ENCODE measurements at regions of chr14 and their contacts with region 1.

Region 1: GRCh38 chr14:81269100-81269978 is 48.6 kb upstream of the GTF2A1 start:
- DNase-seq: no peak
- H3K4me3 ChIP-seq: no peak overlapping the region
- H3K27ac ChIP-seq: no peak overlapping the region
- H3K4me1 ChIP-seq: peaks cover 8% of the 10 kb centered on the region
- H3K27me3 ChIP-seq: no peaks in the 10 kb centered on the region
- CTCF ChIP-seq: peak; percentile 42 to 83 (median 82)
- EP300 ChIP-seq: no peak
- POLR2A ChIP-seq: no peak

Region 2: DNA sequence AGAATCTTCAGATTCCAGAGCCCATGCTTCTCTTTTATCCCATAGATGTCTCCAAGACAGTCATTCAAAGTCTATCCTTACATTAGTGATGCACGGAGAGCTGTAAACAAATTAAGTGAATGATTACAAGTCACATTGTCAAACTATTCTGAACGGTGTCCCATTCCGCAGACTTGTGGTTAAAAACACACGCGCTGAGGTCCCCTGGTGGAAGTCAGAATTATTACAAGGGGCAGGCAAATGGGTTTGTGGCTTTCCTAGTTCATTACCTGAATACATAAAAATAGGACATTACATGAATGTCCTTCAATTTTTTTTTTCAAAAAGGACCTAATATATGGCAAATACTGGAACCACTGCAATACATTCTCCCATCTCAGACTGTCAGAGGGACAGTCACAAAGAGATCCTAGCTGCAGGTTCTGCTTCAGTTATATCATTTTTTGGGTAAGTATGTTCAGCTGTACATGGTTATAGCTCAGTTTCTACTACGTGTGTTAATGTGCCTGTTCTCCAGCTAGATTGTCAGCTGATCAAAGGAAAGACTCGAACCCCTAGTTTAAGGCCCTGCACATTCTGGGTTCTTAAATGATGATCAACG is 183.9 kb after region 1 on chr14:
- intact Hi-C with region 1: loop called in 3 of 4 experiments (anchors 5 kb)
- DNase-seq: peak; percentile 21 to 68 (median 61)
- H3K4me3 ChIP-seq: no peak overlapping the region
- H3K27ac ChIP-seq: no peak overlapping the region
- H3K4me1 ChIP-seq: peaks cover 10% of the 10 kb centered on the region
- H3K27me3 ChIP-seq: no peaks in the 10 kb centered on the region
- CTCF ChIP-seq: peak; percentile 58 to 91 (median 87)
- EP300 ChIP-seq: no peak
- POLR2A ChIP-seq: no peak